Panc1 (cell line): ENCODE measurements at regions of chr19 and their contacts with region 1.

Region 1: DNA sequence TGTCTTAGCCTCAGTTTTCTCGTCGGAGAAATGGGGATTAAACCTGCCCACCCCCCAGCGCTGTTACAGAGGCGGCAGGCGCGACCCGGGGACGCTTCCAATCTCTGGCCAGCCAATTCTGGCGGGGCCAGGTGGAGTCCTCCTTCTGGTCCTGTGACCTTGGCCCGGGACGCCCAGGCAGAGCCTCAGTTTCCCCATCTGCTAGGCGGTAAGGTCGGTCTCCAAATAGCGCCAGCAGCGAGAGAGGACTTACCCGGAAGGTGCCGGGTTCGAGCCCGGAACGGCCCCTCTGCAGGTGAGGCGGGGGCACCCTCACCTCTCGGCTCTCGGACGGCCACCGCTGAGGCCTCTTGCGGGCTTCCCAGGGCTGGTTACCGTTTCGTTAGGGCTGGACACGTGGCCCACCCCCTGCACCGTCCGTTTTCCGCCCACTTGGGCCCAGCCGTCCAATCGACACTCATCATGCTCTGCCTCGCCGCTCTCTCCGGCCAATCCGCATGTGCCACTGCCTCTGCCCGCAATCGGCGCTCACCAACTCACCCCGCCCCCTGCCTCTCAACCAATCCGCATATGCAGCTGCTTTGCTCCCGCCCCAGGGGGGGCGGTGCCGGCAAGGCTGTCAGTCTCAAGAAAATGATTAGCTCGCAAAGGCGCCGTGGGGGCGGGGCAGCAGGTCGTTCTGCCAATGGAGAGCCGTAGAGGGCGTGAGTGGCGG is at the start of gene ISOC2:
- DNase-seq: peak; percentile 98
- ATAC-seq: peak; percentile 96
- H3K4me3 ChIP-seq: peak within 1 kb of the TSS; percentile 91 to 92
- H3K27ac ChIP-seq: peak within 1 kb of the TSS; percentile 92
- H3K4me1 ChIP-seq: peaks cover 15% of the 10 kb centered on the region
- H3K27me3 ChIP-seq: no peaks in the 10 kb centered on the region
- CTCF ChIP-seq: no peak
- total RNA-seq, gene ISOC2: 150 TPM

Region 2: DNA sequence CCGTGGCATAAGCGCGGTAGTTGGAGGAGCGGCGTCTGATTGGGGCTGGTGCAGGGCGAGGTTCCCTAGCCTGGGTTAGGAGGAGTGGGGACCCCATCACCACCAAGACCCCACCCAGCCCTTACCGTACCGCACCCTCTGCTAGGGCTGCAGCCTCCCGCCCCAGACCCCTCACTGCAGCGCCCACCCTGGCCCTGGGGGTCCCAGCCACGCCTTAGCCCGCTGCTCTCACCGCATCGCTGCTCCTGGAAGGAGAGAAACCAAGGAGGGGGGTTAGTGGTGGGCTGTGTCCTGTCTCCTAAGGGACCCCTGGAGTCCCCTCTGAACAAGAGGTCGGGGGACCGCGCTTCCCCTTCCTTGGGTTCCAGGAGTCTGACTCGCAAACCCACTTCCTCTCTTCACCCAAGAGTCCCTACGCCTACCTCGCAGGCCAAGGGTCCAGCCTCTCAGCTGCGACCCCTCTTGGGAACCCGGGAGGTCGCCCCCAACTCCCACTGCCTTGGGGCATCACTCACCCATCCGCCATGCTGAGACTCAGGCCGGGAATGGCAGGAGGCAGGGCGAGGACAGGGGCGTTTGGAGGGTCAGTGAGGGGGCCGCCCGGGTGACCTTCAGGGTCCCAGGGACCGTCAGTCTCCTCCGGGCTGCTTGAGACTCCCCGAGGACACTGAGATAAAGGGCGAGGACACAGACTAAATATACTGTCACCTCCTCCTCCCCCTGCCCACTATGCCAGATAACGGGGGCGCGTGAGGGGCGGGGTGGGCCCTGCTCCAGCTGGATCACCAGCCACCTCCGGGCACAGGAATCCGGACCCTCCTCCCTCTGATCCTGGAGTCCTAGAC is 304.1 kb before region 1 on chr19 and contains the start of gene TNNI3:
- CTCF ChIA-PET with region 1: no interaction called
- POLR2A ChIA-PET with region 1: no interaction called
- in situ Hi-C with region 1: no loop called
- intact Hi-C with region 1: no loop called
- DNase-seq: no peak
- ATAC-seq: no peak
- H3K4me3 ChIP-seq: peak within 1 kb of the TSS; percentile 55 to 71
- H3K27ac ChIP-seq: peak within 1 kb of the TSS; percentile 62; the same call in 1 of the 2 replicates
- H3K4me1 ChIP-seq: peaks cover 8% of the 10 kb centered on the region; the same call in 1 of the 2 replicates
- H3K27me3 ChIP-seq: no peaks in the 10 kb centered on the region
- CTCF ChIP-seq: no peak
- total RNA-seq, gene TNNI3: 14.6 TPM

Region 3: GRCh38 chr19:55451163-55451964 is 10.1 kb before region 1 on chr19:
- CTCF ChIA-PET with region 1: interaction called, 10 read pairs
- POLR2A ChIA-PET with region 1: no interaction called
- in situ Hi-C with region 1: no loop called
- intact Hi-C with region 1: no loop called
- DNase-seq: no peak
- ATAC-seq: peak; percentile 34; the same call in 1 of the 2 replicates
- H3K4me3 ChIP-seq: peak overlapping the region; percentile 29 to 46
- H3K27ac ChIP-seq: no peak overlapping the region
- H3K4me1 ChIP-seq: peaks cover 9% of the 10 kb centered on the region
- H3K27me3 ChIP-seq: peaks cover 6% of the 10 kb centered on the region
- CTCF ChIP-seq: no peak

Region 4: DNA sequence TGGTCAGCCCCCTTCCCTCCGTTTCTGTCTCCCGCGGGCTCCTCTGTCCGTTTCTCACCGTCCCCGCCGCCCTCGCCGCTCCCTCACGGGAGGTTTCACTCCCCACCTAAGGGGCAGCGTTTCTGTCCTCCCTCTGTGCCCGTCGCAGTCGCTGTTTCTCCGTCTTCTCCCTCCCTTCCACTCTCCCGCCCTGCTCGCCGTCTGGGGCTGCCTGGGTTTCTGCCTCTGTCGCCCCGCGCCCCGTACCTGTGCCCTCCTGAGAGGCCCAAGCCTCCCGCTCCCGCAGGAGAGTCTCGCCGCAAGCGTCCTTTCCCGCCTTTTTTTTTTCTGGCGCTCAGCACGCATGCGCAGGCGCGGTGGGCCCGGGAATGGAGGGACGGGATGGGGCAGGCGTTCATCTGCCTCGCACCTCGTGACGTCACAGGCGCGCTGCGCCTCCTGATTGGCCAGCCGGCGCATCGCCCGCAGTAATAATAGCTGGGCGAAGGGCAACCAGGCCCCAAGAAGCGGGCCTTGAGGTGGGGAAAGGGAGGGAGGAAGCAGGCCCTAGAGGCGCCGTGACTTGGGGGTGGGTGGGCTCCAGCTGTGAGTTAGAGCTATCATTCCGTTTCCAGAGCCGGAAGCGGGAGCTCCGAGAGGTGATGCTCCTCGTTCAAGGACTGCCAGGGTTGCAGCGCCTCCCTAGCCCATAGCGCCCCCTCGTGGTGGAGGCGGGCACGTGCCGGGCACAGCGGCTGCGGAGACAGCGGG is 42.3 kb after region 1 on chr19:
- CTCF ChIA-PET with region 1: interaction called, 31 read pairs
- POLR2A ChIA-PET with region 1: interaction called, 3 read pairs
- in situ Hi-C with region 1: no loop called
- intact Hi-C with region 1: no loop called
- DNase-seq: peak; percentile 83
- ATAC-seq: peak; percentile 97
- H3K4me3 ChIP-seq: peak overlapping the region; percentile 39 to 59
- H3K27ac ChIP-seq: peak overlapping the region; percentile 50
- H3K4me1 ChIP-seq: no peaks in the 10 kb centered on the region
- H3K27me3 ChIP-seq: no peaks in the 10 kb centered on the region
- CTCF ChIP-seq: peak; percentile 99